MCF 10A (cell line): ENCODE measurements at regions of chr11 and their contacts with region 1.

Region 1: GRCh38 chr11:101860696-101861427 is 53.9 kb upstream of the CEP126 start:
- DNase-seq: peak; percentile 67
- H3K4me3 Mint-ChIP-seq: no peak overlapping the region
- H3K27ac Mint-ChIP-seq: no peak overlapping the region
- H3K4me1 Mint-ChIP-seq: peaks cover 13% of the 10 kb centered on the region
- H3K27me3 Mint-ChIP-seq: no peaks in the 10 kb centered on the region
- CTCF ChIP-seq: peak; percentile 61

Region 2: DNA sequence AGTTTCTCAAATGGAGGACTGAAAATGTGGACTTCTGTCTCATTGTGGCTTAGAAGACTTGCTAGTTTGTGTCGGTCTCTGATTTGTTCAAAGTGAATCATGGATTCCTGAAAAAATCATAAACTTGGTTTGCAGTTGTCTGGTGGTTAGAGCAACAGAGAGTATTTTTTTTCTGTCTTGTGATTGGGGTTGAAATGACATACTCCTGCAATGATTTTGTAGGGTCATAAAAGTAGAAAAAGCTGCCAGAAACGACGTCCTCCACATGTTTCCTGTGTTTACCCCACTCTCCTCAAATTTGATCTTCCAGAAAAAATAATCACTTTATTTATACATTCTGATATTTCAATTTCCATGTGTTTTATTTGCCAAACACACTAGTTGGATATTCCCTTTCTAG is 512.1 kb before region 1 on chr11:
- CTCF ChIA-PET with region 1: no interaction called
- POLR2A ChIA-PET with region 1: no interaction called
- intact Hi-C with region 1: no loop called
- DNase-seq: no peak
- H3K4me3 Mint-ChIP-seq: no peak overlapping the region
- H3K27ac Mint-ChIP-seq: no peak overlapping the region
- H3K4me1 Mint-ChIP-seq: peaks cover 5% of the 10 kb centered on the region
- H3K27me3 Mint-ChIP-seq: peaks cover 45% of the 10 kb centered on the region
- CTCF ChIP-seq: no peak

Region 3: DNA sequence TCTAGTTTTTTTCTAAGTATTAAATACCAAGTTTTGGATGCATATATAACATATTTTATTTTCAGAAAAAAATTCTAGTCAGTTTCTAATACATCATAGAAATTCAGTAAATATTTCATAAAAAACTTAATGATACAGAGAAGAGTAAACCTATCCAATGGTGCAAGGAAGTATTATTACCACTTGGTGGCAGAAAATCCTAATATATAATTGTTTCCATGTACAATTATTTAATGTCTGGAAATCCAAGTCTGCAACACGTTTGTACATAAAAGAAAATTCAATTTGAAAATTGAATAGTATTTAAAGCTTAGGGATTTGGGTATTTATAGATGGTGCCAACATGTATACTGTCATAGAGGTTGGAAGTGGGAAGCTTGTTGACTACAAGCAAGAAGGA is 404.1 kb before region 1 on chr11:
- CTCF ChIA-PET with region 1: interaction called, 42 read pairs
- POLR2A ChIA-PET with region 1: no interaction called
- intact Hi-C with region 1: no loop called
- DNase-seq: no peak
- H3K4me3 Mint-ChIP-seq: no peak overlapping the region
- H3K27ac Mint-ChIP-seq: no peak overlapping the region
- H3K4me1 Mint-ChIP-seq: peaks cover 7% of the 10 kb centered on the region
- H3K27me3 Mint-ChIP-seq: no peaks in the 10 kb centered on the region
- CTCF ChIP-seq: peak; percentile 34

Region 4: GRCh38 chr11:101803651-101804050 is 57.2 kb before region 1 on chr11:
- CTCF ChIA-PET with region 1: no interaction called
- POLR2A ChIA-PET with region 1: no interaction called
- intact Hi-C with region 1: no loop called
- DNase-seq: no peak
- H3K4me3 Mint-ChIP-seq: no peak overlapping the region
- H3K27ac Mint-ChIP-seq: no peak overlapping the region
- H3K4me1 Mint-ChIP-seq: no peaks in the 10 kb centered on the region
- H3K27me3 Mint-ChIP-seq: no peaks in the 10 kb centered on the region
- CTCF ChIP-seq: no peak

Region 5: DNA sequence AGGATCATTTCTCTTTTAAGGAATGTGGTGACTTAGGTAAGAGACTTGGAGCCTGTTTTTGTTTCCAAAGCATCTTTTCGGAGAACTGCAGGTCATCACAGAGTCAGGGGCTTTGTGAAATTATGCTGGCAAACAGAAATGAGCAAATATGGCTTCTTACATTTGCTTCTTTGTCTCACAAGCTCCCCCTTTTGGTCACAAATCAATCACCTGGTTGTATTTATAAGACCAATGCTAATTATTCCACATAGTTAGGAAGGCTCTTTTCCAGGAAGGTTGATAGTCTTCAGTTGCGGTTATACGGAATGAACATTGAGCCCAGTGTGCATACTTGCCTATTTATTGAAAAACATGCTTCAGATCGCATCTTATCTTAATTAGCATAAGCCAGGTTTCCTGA is 19.4 kb after region 1 on chr11:
- CTCF ChIA-PET with region 1: interaction called, 110 read pairs
- POLR2A ChIA-PET with region 1: interaction called, 4 read pairs
- intact Hi-C with region 1: loop called (anchors 1 kb)
- DNase-seq: peak; percentile 66
- H3K4me3 Mint-ChIP-seq: no peak overlapping the region
- H3K27ac Mint-ChIP-seq: no peak overlapping the region
- H3K4me1 Mint-ChIP-seq: no peaks in the 10 kb centered on the region
- H3K27me3 Mint-ChIP-seq: no peaks in the 10 kb centered on the region
- CTCF ChIP-seq: peak; percentile 33

Region 6: DNA sequence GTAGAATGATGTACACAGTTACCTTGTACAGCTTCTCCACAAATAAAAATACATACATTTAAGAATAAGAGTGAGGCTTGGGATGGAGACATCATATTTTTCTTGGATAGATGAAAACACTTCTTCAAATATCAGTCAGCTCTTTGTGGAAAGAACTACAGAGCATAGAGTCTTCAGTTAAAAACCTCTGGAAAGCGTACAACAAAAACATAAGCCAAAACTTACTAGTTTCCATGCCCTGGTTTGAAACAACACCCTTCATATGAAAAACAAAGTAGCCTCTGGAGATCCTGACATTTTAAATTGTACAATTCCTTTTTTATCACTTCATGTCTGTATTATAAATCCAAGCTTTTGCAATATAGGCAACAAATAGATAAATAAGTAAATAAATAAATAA is 47.0 kb after region 1 on chr11:
- CTCF ChIA-PET with region 1: interaction called, 11 read pairs
- POLR2A ChIA-PET with region 1: no interaction called
- intact Hi-C with region 1: no loop called
- DNase-seq: no peak
- H3K4me3 Mint-ChIP-seq: no peak overlapping the region
- H3K27ac Mint-ChIP-seq: no peak overlapping the region
- H3K4me1 Mint-ChIP-seq: peaks cover 6% of the 10 kb centered on the region
- H3K27me3 Mint-ChIP-seq: no peaks in the 10 kb centered on the region
- CTCF ChIP-seq: no peak

Region 7: GRCh38 chr11:101974255-101974654 is 113.4 kb after region 1 on chr11:
- CTCF ChIA-PET with region 1: interaction called, 13 read pairs
- POLR2A ChIA-PET with region 1: no interaction called
- intact Hi-C with region 1: no loop called
- DNase-seq: no peak
- H3K4me3 Mint-ChIP-seq: no peak overlapping the region
- H3K27ac Mint-ChIP-seq: no peak overlapping the region
- H3K4me1 Mint-ChIP-seq: no peaks in the 10 kb centered on the region
- H3K27me3 Mint-ChIP-seq: no peaks in the 10 kb centered on the region
- CTCF ChIP-seq: no peak

Region 8: DNA sequence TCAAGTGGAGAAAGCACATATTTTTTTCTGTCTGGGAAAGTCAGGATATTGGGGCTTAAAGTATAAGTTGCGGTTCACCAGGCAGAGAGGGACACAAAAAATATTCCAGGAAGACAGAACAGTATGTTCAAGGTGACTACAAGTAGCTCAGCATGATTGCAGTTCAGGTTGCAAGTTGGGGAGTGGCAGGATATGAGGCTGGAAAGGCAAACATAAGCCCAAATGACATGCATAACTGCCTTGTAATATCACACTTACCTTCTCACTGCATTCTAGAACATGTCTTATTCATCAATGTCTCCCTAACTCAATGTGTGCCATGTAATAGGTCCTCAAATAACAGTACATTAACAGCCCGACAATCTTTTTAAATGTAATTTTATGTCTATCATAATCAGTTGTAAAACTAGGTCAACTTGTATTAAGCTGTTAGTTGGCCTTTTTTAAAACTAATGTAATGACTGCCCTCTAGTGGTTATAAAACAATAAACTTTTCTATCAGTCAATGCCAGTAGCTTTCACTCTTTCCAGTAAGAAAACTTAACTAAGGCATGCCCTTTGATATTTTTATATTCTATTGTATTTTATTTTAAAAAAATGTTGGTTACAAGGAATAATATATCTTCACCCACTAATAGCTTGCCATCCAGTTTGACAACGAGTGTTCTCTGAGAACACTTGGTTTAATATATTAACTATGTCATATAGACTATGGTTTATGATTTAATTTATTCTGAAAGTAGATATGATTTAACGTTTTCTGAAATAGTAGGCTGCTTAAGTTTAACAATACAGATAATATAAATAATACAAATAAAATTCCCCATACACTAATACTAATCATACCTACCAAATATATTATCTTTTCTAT is 146.9 kb after region 1 on chr11:
- CTCF ChIA-PET with region 1: interaction called, 372 read pairs
- POLR2A ChIA-PET with region 1: interaction called, 35 read pairs
- intact Hi-C with region 1: loop called (anchors 1 kb)
- DNase-seq: peak; percentile 70
- H3K4me3 Mint-ChIP-seq: no peak overlapping the region
- H3K27ac Mint-ChIP-seq: peak overlapping the region; percentile 90
- H3K4me1 Mint-ChIP-seq: peaks cover 31% of the 10 kb centered on the region
- H3K27me3 Mint-ChIP-seq: no peaks in the 10 kb centered on the region
- CTCF ChIP-seq: peak; percentile 44

Region 9: DNA sequence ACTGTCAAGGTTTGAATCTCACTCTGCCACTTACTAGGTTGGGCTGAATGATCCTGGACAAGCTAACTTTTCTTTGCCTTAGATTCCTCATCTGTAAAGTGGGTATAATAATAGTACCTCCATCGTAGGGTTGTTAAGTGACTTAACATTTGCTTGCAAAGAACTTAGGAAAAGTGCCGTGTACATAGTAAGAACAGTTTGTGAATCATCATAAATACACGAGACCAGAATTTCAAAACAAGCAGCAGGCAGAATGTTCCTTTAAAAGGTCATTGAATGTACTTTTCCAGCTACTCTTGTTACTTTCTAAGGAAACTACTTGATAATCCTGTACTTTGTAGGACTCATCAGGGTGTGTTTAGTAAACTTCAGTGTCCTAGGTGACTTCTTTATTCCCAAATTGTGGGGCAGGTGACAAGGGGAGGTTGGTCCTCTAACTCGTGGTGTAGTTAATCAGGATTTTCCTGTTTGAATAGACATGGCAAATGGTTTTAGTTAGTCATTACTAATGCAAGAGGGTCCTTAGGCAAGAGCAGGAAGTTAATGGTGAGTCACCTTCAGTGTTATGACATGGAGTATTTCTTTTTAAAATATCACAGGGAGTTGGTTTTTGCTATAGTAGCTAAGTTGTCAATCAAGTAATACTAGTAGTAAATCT is 317.2 kb after region 1 on chr11:
- CTCF ChIA-PET with region 1: interaction called, 3 read pairs
- POLR2A ChIA-PET with region 1: no interaction called
- intact Hi-C with region 1: loop called (anchors 5 kb)
- DNase-seq: peak; percentile 92
- H3K4me3 Mint-ChIP-seq: peak overlapping the region; percentile 49
- H3K27ac Mint-ChIP-seq: peak overlapping the region; percentile 17
- H3K4me1 Mint-ChIP-seq: peaks cover 38% of the 10 kb centered on the region
- H3K27me3 Mint-ChIP-seq: no peaks in the 10 kb centered on the region
- CTCF ChIP-seq: no peak